MCF 10A (cell line): ENCODE measurements at regions of chr9 and their contacts with region 1.

Region 1: GRCh38 chr9:37994639-37995347 is 74.2 kb downstream of the SHB start:
- DNase-seq: peak; percentile 72
- H3K4me3 Mint-ChIP-seq: peak overlapping the region; percentile 59
- H3K27ac Mint-ChIP-seq: peak overlapping the region; percentile 55
- H3K4me1 Mint-ChIP-seq: peaks cover 37% of the 10 kb centered on the region
- H3K27me3 Mint-ChIP-seq: no peaks in the 10 kb centered on the region
- CTCF ChIP-seq: no peak

Region 2: DNA sequence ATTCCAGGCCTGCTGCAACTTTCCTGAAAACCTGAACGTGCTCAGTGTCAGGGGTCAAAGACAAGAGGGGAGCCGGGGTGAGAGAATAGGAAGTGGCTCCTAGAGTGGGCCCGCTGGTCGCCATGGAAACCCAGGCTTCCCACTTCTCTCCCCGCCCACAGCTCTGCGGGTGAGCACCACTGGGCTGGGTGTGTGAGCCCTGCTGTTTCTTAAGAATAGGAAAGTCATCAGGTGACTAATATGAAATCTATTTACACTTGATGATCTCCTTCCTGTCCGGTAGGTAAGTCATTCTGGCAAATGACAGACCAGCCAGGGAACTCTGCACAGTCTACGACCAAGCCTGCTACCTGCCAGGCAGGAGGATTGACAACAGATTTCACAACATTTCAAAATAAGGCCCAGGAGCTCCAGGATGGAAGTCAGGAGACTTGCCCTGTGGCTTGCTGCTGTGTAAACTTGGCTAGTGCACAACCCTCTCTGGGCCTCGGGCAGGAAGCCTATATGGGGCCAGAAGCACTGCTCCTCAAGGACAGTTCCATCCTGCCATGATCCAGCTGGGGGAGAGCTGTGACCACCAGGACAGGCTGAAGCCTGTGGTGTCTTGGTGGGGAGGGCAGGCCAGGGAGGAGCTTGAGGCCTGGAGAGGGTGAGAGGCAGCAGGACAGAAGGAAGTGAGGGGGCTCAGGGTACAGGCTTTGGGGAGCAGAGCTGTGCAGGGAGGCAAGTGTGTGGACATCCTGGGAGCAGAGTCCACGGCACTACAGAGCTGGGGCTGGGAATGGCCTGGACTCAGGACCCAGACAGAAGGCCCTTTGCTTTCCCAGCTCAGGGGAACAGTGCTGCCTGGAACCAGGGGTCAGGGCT is 13.6 kb after region 1 on chr9:
- CTCF ChIA-PET with region 1: interaction called, 5 read pairs
- POLR2A ChIA-PET with region 1: interaction called, 13 read pairs
- intact Hi-C with region 1: loop called (anchors 1 kb)
- DNase-seq: peak; percentile 93
- H3K4me3 Mint-ChIP-seq: no peak overlapping the region
- H3K27ac Mint-ChIP-seq: peak overlapping the region; percentile 99
- H3K4me1 Mint-ChIP-seq: peaks cover 44% of the 10 kb centered on the region
- H3K27me3 Mint-ChIP-seq: no peaks in the 10 kb centered on the region
- CTCF ChIP-seq: no peak

Region 3: DNA sequence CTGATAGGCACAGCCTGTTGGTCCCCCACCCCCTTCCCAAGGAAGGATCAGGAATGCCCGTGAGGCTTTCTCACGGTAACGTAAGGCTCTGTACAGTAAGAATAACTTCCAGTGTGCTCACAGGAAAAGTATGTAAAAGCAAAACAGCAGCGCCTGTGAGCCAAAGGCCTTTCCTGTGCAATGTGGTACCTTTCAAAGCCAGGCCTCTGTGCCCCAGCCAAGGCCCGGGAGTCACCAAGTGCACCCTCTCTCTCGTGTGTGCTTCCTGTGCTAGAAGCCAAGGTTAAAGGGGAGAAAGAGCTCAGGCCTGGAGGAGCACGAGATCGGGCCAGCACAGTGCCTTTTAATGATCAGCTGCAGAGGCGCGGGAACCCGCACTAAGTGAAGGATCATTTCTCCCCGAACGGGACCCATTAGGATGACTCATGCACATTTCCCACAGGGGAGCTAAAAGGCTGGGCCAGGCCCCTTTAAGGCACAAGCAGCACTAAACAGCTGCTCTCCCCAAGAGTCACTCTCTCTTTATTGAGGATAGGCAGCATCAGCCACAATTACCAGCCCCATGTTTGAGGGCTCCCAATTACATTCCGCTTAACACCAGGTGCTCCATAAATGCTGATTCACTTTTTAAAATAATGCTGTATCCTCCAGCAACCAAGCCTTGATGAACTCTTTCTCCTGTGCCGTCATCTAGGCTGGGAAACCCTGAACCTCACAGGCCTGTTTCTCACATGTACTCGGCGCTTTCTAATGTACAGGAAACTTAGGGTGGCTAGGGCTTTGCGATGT is 31.4 kb after region 1 on chr9:
- CTCF ChIA-PET with region 1: interaction called, 4 read pairs
- POLR2A ChIA-PET with region 1: interaction called, 18 read pairs
- intact Hi-C with region 1: no loop called
- DNase-seq: peak; percentile 88
- H3K4me3 Mint-ChIP-seq: peak overlapping the region; percentile 38
- H3K27ac Mint-ChIP-seq: peak overlapping the region; percentile 83
- H3K4me1 Mint-ChIP-seq: peaks cover 44% of the 10 kb centered on the region
- H3K27me3 Mint-ChIP-seq: no peaks in the 10 kb centered on the region
- CTCF ChIP-seq: no peak